Breast epithelium (tissue), 4 donors: ENCODE measurements at regions of chr13 and their contacts with region 1.

Region 1: GRCh38 chr13:109389892-109390345 is 396.5 kb downstream of the IRS2 start:
- DNase-seq: no peak
- H3K4me3 ChIP-seq: no peak overlapping the region
- H3K27ac ChIP-seq: peak overlapping the region in 1 of 2 donors; percentile 20
- H3K4me1 ChIP-seq: no peaks in the 10 kb centered on the region
- H3K27me3 ChIP-seq: no peaks in the 10 kb centered on the region
- CTCF ChIP-seq: no peak
- POLR2A ChIP-seq: no peak

Region 2: GRCh38 chr13:109058082-109058481 is 331.8 kb before region 1 on chr13:
- intact Hi-C with region 1: loop called (anchors 10 kb)
- DNase-seq: no peak
- H3K4me3 ChIP-seq: no peak overlapping the region
- H3K27ac ChIP-seq: no peak overlapping the region
- H3K4me1 ChIP-seq: no peaks in the 10 kb centered on the region
- H3K27me3 ChIP-seq: no peaks in the 10 kb centered on the region
- CTCF ChIP-seq: no peak
- POLR2A ChIP-seq: no peak